Sigmoid colon (tissue), 7 donors: ENCODE measurements at regions of chr20 and their contacts with region 1.

Region 1: GRCh38 chr20:23668477-23668951 is 20.3 kb downstream of the CST4 start:
- DNase-seq: peak; percentile 74
- H3K4me3 ChIP-seq: no peak overlapping the region
- H3K27ac ChIP-seq: no peak overlapping the region
- H3K4me1 ChIP-seq: no peaks in the 10 kb centered on the region
- H3K27me3 ChIP-seq: no peaks in the 10 kb centered on the region
- CTCF ChIP-seq: peak in 3 of 4 experiments; percentile 61 to 84 (median 64)
- EP300 ChIP-seq: no peak
- POLR2A ChIP-seq: no peak

Region 2: DNA sequence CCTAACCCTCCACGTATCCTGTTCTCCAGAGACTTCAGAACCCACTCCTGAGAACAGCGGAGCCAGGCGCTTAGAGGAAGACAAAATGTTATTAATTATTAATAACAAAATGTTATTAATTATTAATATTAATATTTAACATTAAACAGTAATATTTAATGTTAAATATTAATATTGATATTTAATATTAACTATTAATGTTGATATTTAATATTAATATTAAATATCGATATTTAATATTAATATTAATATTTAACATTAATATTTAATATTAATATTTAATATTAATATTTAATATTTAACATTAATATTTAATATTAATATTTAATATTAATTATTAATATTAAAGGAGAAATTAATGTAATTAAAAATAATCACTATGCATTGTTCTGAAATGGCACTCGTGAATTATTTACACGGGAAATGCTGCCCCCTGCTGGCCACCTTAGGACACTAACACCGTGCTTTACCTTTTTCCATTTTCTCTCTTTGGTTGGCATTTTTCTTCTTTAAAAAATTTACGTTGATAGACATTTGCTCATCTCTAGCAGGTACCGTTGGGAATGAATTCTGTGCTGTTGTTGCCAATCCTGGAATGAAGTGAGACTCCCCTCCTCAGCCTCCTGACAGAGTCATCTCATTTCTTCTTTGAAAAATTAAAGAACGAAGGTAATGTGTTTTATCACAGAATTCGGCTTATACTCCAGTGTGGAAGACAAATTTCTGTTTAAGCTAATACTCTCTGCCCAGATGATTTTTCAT is 327.6 kb after region 1 on chr20:
- intact Hi-C with region 1: loop called (anchors 5 kb)
- DNase-seq: no peak
- H3K4me3 ChIP-seq: no peak overlapping the region
- H3K27ac ChIP-seq: no peak overlapping the region
- H3K4me1 ChIP-seq: no peaks in the 10 kb centered on the region
- H3K27me3 ChIP-seq: peaks cover 0 to 7% (median 0%) of the 10 kb centered on the region in 3 donors
- CTCF ChIP-seq: peak; percentile 32 to 70 (median 56)
- EP300 ChIP-seq: no peak
- POLR2A ChIP-seq: no peak